Lower leg skin (tissue), 4 donors: ENCODE measurements at regions of chr18 and their contacts with region 1.

Region 1: GRCh38 chr18:410047-410455 is 90.5 kb downstream of the COLEC12 start:
- DNase-seq: no peak
- H3K4me3 ChIP-seq: no peak overlapping the region
- CTCF ChIP-seq: no peak
- POLR2A ChIP-seq: no peak

Region 2: DNA sequence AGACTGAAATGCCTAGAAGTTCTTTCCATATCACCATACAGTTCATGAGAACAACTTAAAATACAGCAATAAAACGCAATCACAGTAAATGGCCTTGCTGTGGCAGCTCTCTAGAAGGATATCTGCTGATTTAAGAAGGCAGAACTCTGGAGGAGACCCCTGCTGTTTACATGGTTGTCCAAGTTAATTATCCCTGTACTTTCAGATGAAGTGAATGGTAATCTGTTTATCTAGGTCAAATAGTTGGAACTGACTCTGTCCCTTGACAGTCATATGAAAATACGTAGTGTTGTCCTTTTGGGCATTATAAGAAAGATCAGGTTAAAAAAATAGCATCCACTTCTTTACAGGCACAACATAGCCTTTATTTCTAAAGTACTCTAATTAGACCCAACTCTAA is 25.2 kb before region 1 on chr18:
- intact Hi-C with region 1: loop called (anchors 2 kb)
- DNase-seq: no peak
- H3K4me3 ChIP-seq: no peak overlapping the region
- CTCF ChIP-seq: no peak
- POLR2A ChIP-seq: no peak